ENCODE measurements at regions of chr6 and their contacts with region 1.

Region 1: GRCh38 chr6:128327890-128328289 is 192.5 kb downstream of the PTPRK start:
- DNase-seq: no peak
- ATAC-seq: peak; percentile 49
- H3K4me3 Mint-ChIP-seq: no peak overlapping the region
- H3K27ac Mint-ChIP-seq: no peak overlapping the region
- H3K4me1 Mint-ChIP-seq: no peaks in the 10 kb centered on the region
- H3K27me3 Mint-ChIP-seq: no peaks in the 10 kb centered on the region
- CTCF ChIP-seq: no peak

Region 2: DNA sequence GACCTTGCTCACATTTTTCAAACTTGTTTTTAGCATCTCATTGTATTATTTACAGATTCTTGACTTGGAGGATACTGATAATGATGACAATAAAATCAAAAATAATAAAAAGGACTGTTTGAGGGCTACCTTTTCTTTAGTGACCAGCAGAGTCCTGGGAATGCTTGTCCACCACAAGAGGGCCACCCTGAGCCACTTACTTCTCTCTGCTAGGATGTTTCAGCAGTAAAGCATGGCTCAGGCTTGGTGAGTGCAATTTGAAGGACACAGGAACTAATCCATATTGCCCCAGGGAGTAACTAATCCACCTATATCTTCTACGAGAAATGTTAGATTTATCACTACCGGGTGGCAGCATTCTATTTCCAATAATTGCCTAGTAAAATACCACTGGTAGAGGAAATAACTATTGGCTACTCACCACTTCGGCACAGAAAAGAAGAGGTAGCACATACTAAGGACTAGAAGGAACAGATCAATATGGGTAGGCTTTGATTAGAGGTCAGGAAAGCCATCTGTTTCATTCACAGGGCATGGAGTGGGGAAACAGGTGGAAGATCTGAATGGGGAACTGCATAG is 862.9 kb before region 1 on chr6:
- CTCF ChIA-PET with region 1: interaction called, 3 read pairs
- POLR2A ChIA-PET with region 1: no interaction called
- intact Hi-C with region 1: loop called (anchors 10 kb)
- DNase-seq: no peak
- ATAC-seq: peak; percentile 52
- H3K4me3 Mint-ChIP-seq: no peak overlapping the region
- H3K27ac Mint-ChIP-seq: no peak overlapping the region
- H3K4me1 Mint-ChIP-seq: no peaks in the 10 kb centered on the region
- H3K27me3 Mint-ChIP-seq: no peaks in the 10 kb centered on the region
- CTCF ChIP-seq: no peak

Region 3: GRCh38 chr6:127737009-127737486 is 590.8 kb before region 1 on chr6:
- CTCF ChIA-PET with region 1: interaction called, 17 read pairs
- POLR2A ChIA-PET with region 1: no interaction called
- intact Hi-C with region 1: loop called (anchors 1 kb)
- DNase-seq: no peak
- ATAC-seq: no peak
- H3K4me3 Mint-ChIP-seq: no peak overlapping the region
- H3K27ac Mint-ChIP-seq: no peak overlapping the region
- H3K4me1 Mint-ChIP-seq: peaks cover 1% of the 10 kb centered on the region
- H3K27me3 Mint-ChIP-seq: no peaks in the 10 kb centered on the region
- CTCF ChIP-seq: no peak

Region 4: GRCh38 chr6:127855542-127856159 is 472.2 kb before region 1 on chr6:
- CTCF ChIA-PET with region 1: interaction called, 4 read pairs
- POLR2A ChIA-PET with region 1: no interaction called
- intact Hi-C with region 1: loop called (anchors 5 kb)
- DNase-seq: no peak
- ATAC-seq: no peak
- H3K4me3 Mint-ChIP-seq: no peak overlapping the region
- H3K27ac Mint-ChIP-seq: no peak overlapping the region
- H3K4me1 Mint-ChIP-seq: no peaks in the 10 kb centered on the region
- H3K27me3 Mint-ChIP-seq: no peaks in the 10 kb centered on the region
- CTCF ChIP-seq: no peak

Region 5: DNA sequence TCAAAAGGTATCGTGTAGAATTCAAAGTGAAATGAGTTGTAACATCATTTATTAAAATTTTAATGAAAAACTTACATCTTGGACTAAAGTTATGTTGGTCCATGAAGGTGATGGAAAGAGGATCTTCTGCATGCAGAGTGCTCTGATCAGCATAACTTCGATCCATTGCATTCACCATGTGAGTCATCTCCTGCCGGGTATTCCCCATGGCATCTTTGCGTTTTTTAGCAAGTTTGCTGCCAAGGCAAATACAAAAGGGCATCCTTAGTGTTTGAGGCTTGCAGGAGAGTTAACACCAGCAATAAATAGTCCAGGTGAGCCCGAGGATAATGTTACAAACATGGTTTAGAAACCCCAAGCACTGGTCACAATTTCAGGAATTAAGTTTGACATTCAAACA is 322.9 kb before region 1 on chr6:
- CTCF ChIA-PET with region 1: interaction called, 3 read pairs
- POLR2A ChIA-PET with region 1: no interaction called
- intact Hi-C with region 1: loop called (anchors 10 kb)
- DNase-seq: no peak
- ATAC-seq: no peak
- H3K4me3 Mint-ChIP-seq: no peak overlapping the region
- H3K27ac Mint-ChIP-seq: no peak overlapping the region
- H3K4me1 Mint-ChIP-seq: no peaks in the 10 kb centered on the region
- H3K27me3 Mint-ChIP-seq: no peaks in the 10 kb centered on the region
- CTCF ChIP-seq: no peak

Region 6: DNA sequence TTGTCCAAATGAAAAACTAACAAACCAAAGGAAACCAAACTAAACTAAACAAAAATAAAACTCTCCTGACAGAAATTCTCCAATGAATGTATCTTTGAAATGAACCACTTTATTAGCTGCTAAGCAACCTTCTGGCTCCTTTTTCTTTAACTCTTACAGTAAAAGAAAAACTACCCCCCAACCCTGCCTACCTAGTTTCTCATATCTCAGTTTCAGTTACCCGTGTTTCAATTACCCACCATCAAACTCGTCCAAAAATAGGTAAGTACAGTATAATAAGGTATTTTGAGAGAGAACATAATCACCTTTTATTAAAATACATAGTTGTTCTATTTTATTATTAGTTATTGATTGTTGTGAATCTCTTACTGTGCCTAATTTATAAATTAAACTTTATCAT is 249.6 kb before region 1 on chr6:
- CTCF ChIA-PET with region 1: no interaction called
- POLR2A ChIA-PET with region 1: no interaction called
- intact Hi-C with region 1: loop called (anchors 5 kb)
- DNase-seq: no peak
- ATAC-seq: no peak
- H3K4me3 Mint-ChIP-seq: no peak overlapping the region
- H3K27ac Mint-ChIP-seq: no peak overlapping the region
- H3K4me1 Mint-ChIP-seq: no peaks in the 10 kb centered on the region
- H3K27me3 Mint-ChIP-seq: no peaks in the 10 kb centered on the region
- CTCF ChIP-seq: no peak

Region 7: DNA sequence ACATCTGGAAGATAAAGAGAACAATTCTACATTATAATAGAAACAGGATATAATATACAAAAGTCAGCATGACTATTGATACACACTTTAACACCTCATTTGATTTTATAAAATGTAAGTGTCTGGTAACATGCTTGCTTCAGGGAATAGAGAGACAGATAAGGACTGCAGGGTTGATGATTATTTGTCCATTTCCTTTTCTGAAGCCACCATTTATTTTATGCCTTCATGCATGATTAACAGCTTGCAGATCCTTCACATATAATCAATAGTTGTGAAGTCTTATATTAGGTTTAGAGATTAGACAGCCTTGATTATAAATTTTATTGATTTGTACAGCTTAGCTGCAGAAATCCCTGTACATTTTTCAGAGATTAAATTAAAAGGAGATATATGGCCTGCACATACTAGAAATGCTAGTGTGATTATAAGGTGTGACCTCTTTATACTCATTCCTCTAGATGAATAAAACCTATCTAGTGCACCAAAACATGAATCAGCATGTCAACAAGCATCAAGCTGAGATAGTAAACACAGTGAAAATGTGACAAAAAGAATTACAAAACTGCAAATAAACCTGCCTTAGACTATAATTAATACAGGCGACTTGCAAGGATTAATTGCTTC is 228.2 kb before region 1 on chr6:
- CTCF ChIA-PET with region 1: no interaction called
- POLR2A ChIA-PET with region 1: no interaction called
- intact Hi-C with region 1: loop called (anchors 10 kb)
- DNase-seq: no peak
- ATAC-seq: no peak
- H3K4me3 Mint-ChIP-seq: no peak overlapping the region
- H3K27ac Mint-ChIP-seq: no peak overlapping the region
- H3K4me1 Mint-ChIP-seq: peaks cover 3% of the 10 kb centered on the region
- H3K27me3 Mint-ChIP-seq: no peaks in the 10 kb centered on the region
- CTCF ChIP-seq: no peak

Region 8: DNA sequence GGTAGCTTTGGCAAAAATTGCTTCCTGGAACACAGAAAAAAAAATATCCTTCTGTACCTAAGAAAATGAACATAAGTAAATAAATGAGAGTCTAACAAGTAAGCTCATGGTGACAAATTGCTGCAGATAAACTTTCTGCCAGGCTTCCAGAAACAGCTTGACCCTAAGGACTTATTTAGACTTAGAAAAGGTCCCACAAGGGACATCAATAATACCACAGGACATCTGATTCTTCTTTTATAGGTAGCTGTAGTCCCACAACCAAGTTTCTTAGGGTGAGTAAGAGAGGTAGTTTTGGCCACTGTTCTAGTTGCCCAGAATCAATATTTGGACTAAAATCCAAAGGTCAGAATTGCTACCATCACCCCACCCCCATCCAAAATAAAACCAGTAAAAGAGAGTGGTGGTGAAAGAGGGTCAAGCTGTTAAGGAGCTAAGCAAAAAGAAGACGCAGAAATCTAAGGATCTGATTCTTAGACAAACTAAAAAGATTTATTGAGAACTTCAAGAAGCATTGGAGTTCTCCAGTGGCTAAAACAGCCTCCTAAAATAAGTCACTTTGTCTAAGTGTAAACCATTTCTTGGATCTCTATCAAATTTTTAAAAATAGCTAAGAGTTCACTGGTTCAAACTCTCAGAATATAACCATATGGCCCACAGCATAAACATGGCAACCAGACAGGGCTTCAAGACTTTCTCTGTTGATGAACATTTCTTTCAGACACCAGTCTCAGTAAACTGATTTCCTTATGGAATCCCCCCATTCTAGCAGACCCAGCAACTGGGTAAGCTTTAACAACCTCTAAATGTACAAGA is 12.0 kb after region 1 on chr6:
- CTCF ChIA-PET with region 1: no interaction called
- POLR2A ChIA-PET with region 1: no interaction called
- intact Hi-C with region 1: no loop called
- DNase-seq: no peak
- ATAC-seq: no peak
- H3K4me3 Mint-ChIP-seq: no peak overlapping the region
- H3K27ac Mint-ChIP-seq: no peak overlapping the region
- H3K4me1 Mint-ChIP-seq: no peaks in the 10 kb centered on the region
- H3K27me3 Mint-ChIP-seq: no peaks in the 10 kb centered on the region
- CTCF ChIP-seq: no peak

Region 9: GRCh38 chr6:128672023-128672422 is 344.1 kb after region 1 on chr6:
- CTCF ChIA-PET with region 1: no interaction called
- POLR2A ChIA-PET with region 1: no interaction called
- intact Hi-C with region 1: no loop called
- DNase-seq: no peak
- ATAC-seq: no peak
- H3K4me3 Mint-ChIP-seq: no peak overlapping the region
- H3K27ac Mint-ChIP-seq: no peak overlapping the region
- H3K4me1 Mint-ChIP-seq: no peaks in the 10 kb centered on the region
- H3K27me3 Mint-ChIP-seq: no peaks in the 10 kb centered on the region
- CTCF ChIP-seq: no peak

Measured in activated B cell treated with CpG ODN at 0.5 μM for 24 hours (primary cell).